ENCODE measurements at regions of chr9 and their contacts with region 1.

Region 1: GRCh38 chr9:72856972-72857623 is 95.8 kb downstream of the ALDH1A1 start:
- DNase-seq: peak in 2 of 10 donors; percentile 16 to 35
- H3K4me3 ChIP-seq: peak overlapping the region in 3 of 59 donors; percentile 16 to 22 (median 21)
- H3K27ac ChIP-seq: peak overlapping the region in 12 of 59 donors; percentile 7 to 53 (median 24)
- H3K27me3 ChIP-seq: no peaks in the 10 kb centered on the region
- CTCF ChIP-seq: peak; percentile 41 to 84 (median 72)

Region 2: GRCh38 chr9:73023025-73023541 is 166.0 kb after region 1 on chr9:
- intact Hi-C with region 1: loop called (anchors 5 to 10 kb)
- DNase-seq: peak in 1 of 10 donors; percentile 42
- H3K4me3 ChIP-seq: no peak overlapping the region
- H3K27ac ChIP-seq: no peak overlapping the region
- H3K27me3 ChIP-seq: no peaks in the 10 kb centered on the region
- CTCF ChIP-seq: peak; percentile 55 to 86 (median 75)

Region 3: GRCh38 chr9:73081979-73082657 is 225.0 kb after region 1 on chr9:
- intact Hi-C with region 1: loop called in 1 of 2 experiments (anchors 5 kb)
- DNase-seq: peak in 1 of 10 donors; percentile 6
- H3K4me3 ChIP-seq: no peak overlapping the region
- H3K27ac ChIP-seq: peak overlapping the region in 7 of 59 donors; percentile 2 to 53 (median 13)
- H3K27me3 ChIP-seq: no peaks in the 10 kb centered on the region
- CTCF ChIP-seq: peak in 55 of 56 donors; percentile 52 to 85 (median 73)